OCI-LY7 (cell line): ENCODE measurements at regions of chr1 and their contacts with region 1.

Region 1: GRCh38 chr1:245380790-245381535 is 226.2 kb downstream of the KIF26B start:
- DNase-seq: no peak
- H3K4me3 ChIP-seq: no peak overlapping the region
- H3K27ac ChIP-seq: no peak overlapping the region
- H3K4me1 ChIP-seq: no peaks in the 10 kb centered on the region
- CTCF ChIP-seq: peak; percentile 66

Region 2: GRCh38 chr1:245156081-245156735 is 224.8 kb before region 1 on chr1:
- CTCF ChIA-PET with region 1: no interaction called
- POLR2A ChIA-PET with region 1: no interaction called
- intact Hi-C with region 1: loop called (anchors 5 kb)
- DNase-seq: peak; percentile 85
- H3K4me3 ChIP-seq: peak overlapping the region; percentile 66
- H3K27ac ChIP-seq: no peak overlapping the region
- H3K4me1 ChIP-seq: peaks cover 7% of the 10 kb centered on the region
- CTCF ChIP-seq: peak; percentile 72

Region 3: GRCh38 chr1:245441689-245442088 is 60.7 kb after region 1 on chr1:
- CTCF ChIA-PET with region 1: no interaction called
- POLR2A ChIA-PET with region 1: no interaction called
- intact Hi-C with region 1: no loop called
- DNase-seq: no peak
- H3K4me3 ChIP-seq: no peak overlapping the region
- H3K27ac ChIP-seq: no peak overlapping the region
- H3K4me1 ChIP-seq: no peaks in the 10 kb centered on the region
- CTCF ChIP-seq: no peak

Region 4: DNA sequence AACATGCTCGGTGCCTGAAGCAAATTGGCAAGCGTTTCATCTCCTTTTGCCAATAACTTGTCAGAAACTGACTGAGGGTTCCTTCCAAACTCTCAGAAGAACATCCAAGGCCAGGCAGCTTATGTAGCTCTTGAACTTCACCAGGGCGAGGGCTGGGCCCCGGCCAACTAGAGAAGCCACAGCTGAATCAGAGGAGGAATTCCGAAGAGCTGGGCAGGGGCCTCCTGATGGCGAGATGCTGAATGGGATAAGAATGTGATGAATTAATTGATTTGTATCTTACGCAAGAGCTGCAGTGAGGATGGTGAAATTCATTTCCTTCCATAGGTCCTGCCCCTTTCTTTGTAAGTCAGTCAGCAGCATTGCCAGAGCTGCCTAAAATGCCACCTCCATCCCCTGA is 119.6 kb after region 1 on chr1:
- CTCF ChIA-PET with region 1: no interaction called
- POLR2A ChIA-PET with region 1: no interaction called
- intact Hi-C with region 1: no loop called
- DNase-seq: no peak
- H3K4me3 ChIP-seq: no peak overlapping the region
- H3K27ac ChIP-seq: no peak overlapping the region
- H3K4me1 ChIP-seq: no peaks in the 10 kb centered on the region
- CTCF ChIP-seq: no peak